ENCODE measurements at regions of chr12 and their contacts with region 1.

Region 1: DNA sequence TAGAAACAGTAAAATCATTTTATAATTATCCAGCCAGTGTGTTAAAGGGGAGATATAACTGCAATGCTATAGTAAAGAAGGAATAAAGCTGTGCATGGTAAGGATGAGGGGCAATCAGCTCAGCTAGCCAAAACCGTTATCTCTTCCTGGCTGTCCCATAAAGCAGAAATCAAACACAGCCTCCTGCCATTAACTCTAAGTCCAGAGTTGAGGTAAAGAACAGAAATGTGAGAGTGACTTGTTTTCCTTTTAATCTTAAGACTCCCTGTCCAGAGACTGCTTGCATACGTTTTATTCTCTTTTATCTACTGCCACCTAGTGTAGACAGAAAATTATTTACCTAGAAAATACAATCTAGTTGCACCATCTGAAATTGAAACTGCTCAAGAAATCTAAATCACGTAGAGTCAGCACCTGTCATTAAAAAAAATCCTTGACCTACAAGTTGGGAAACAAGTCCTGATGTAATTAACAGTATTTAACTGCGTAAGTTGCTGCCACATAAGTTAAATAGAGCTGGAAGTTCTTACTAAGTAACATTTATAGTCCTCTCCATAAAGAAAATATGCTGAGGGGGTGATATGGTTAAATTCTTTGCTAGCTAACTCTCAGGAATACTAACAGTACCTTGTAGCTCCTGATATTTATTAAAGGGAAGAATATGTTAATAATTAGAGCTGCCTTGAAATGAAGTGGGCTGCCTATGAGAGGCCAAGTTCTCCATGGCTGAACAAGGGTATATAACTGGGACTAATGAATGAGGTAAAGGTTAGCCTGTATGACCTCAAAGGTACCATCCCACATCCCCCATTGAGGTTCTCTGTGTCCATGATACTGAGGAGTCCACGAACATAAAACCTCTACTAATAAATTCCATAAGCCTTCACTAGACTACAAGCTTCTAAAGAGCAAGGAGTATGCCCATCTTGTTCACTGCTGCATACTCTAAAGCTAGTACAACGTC is 62.7 kb downstream of the GALNT4 start:
- DNase-seq: peak; percentile 59
- H3K27ac ChIP-seq: no peak overlapping the region
- CTCF ChIP-seq: peak; percentile 56

Region 2: DNA sequence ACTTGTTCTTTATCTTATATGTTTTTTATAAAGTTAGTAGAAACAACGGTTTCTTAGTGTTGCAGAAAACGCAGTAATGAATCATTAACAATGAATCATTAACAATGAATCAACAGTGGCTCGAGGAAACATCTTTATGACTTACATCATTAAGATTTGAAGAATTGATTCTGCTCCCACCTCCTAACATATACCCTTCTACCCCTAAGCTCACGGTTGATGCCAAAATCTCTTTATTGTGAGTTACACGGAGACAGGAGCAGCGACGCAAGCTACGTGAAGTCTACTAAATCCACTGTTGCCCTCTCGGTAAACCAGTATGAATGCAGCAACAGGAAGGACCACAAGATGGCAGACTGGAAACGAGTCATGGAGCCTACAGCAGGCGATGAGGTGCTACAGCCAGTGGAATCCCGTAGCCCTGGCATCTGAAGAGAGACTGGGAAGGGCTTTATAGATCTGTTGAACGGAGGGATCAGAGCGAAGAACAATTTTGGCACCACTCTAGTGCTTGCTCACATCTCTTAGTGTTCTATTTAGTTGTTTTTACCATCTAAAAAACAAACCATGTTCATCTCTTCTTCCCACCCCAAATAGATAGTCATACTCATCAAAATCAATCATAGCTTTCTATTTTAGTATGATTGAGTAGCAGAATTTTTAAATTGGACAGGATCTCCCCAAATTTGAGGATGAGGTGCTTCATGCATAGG is 442.4 kb before region 1 on chr12:
- CTCF ChIA-PET with region 1: interaction called, 11 read pairs
- POLR2A ChIA-PET with region 1: no interaction called
- DNase-seq: peak; percentile 64
- H3K27ac ChIP-seq: no peak overlapping the region
- CTCF ChIP-seq: peak; percentile 89

Region 3: GRCh38 chr12:89352492-89353187 is 109.3 kb before region 1 on chr12 and contains the start of gene DUSP6:
- CTCF ChIA-PET with region 1: interaction called, 14 read pairs
- POLR2A ChIA-PET with region 1: no interaction called
- DNase-seq: peak; percentile 99
- H3K27ac ChIP-seq: peak within 1 kb of the TSS; percentile 100
- CTCF ChIP-seq: no peak

Region 4: DNA sequence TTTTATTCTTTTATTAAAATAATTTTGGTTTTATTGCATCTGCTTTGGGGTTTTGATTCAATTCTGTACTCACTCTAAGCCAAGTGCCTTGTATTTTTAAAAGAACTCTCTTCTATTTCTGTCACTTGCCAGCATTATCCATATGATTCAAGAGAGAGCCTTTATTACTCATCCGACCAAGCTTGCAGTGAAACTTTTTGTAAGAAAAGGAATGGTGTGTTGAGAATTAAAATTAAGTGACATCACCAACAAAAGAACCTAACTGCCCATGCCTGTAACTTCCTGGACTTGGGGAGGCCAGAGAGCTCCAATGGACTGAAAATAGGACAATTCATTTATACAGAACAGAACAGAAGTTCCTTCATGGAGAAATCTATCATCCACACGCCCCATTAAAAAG is 10.6 kb after region 1 on chr12:
- CTCF ChIA-PET with region 1: no interaction called
- POLR2A ChIA-PET with region 1: no interaction called
- DNase-seq: no peak
- H3K27ac ChIP-seq: no peak overlapping the region
- CTCF ChIP-seq: no peak

Region 5: DNA sequence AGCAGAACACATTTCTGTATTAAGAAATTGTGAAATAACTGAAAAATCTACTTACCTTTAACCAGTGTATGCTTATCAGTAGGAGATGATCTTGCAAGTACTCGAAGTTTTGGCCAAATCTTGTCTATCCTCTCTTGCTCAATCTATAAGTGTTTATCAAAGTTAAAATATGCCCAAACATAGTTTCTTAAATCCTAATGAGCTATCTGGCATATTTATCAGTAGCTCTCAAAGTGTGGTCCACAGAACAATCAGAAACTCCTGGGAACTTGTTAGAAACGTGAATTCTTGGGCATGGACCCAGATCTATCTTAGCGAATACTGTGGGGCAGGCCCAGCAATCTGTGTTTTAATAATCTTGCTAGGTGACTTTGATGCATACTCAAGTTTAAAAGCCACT is 148.4 kb after region 1 on chr12:
- CTCF ChIA-PET with region 1: no interaction called
- POLR2A ChIA-PET with region 1: no interaction called
- DNase-seq: no peak
- H3K27ac ChIP-seq: no peak overlapping the region
- CTCF ChIP-seq: no peak